OCI-LY7 (cell line): ENCODE measurements at regions of chr7 and their contacts with region 1.

Region 1: DNA sequence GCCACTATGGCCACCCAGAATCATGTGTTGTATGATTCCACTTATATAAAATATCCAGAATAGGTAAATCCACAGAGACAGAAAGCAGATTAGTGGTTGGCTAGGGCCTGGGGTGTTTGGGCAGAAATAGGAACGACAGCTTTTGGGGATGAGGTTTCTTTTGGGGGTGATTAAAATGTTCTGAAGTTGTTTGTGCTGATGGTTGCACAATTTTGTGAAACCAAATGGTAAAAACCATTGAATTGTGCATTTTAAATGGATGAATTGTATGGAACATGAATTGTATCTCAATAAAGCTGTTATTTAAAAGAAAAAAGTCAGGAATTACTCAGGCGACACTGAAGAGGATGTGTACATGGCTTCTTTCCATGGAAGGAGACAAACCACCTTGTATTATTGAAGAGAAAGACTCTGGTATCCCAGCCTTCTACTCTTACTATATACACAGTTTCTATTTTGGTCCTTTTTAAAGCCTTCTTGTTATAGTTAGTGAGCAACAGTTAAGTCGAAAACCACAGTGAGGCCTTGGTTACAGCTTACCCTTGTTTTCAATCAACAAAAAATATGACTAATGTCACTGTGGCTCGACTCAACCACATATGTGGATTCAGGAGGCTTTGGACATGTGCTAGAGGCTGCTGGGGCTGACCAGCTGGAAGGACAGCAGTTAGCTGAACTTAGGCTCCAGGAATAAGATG is 57.1 kb upstream of the KMT2E start:
- DNase-seq: no peak
- H3K4me3 ChIP-seq: no peak overlapping the region
- H3K27ac ChIP-seq: no peak overlapping the region
- H3K4me1 ChIP-seq: peaks cover 22% of the 10 kb centered on the region
- CTCF ChIP-seq: no peak

Region 2: DNA sequence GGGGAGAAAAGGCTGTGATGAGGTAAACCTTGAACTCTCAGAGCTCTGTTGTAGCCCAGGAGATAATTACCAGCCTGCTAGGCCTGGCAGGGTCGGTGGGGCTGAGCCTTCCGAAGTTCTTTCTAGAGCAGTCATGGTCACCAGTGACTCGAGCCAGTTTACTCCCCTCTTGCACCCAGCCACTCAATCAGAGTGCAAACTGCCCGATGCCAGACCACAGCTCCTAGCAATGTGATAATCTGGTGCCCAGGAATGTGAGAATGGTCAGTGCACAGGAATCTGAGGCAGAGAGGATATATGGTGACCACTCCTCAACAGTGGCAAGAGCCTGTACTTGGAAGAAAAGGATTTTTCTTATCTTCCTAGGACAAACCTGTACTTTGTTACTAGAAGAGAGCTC is 10.7 kb after region 1 on chr7:
- CTCF ChIA-PET with region 1: no interaction called
- POLR2A ChIA-PET with region 1: interaction called, 15 read pairs
- intact Hi-C with region 1: no loop called
- DNase-seq: no peak
- H3K4me3 ChIP-seq: no peak overlapping the region
- H3K27ac ChIP-seq: no peak overlapping the region
- H3K4me1 ChIP-seq: no peaks in the 10 kb centered on the region
- CTCF ChIP-seq: no peak

Region 3: GRCh38 chr7:105209433-105209832 is 252.5 kb after region 1 on chr7:
- CTCF ChIA-PET with region 1: no interaction called
- POLR2A ChIA-PET with region 1: interaction called, 13 read pairs
- intact Hi-C with region 1: no loop called
- DNase-seq: no peak
- H3K4me3 ChIP-seq: no peak overlapping the region
- H3K27ac ChIP-seq: no peak overlapping the region
- H3K4me1 ChIP-seq: no peaks in the 10 kb centered on the region
- CTCF ChIP-seq: no peak